AG04449 (cell line): ENCODE measurements at regions of chr19 and their contacts with region 1.

Region 1: GRCh38 chr19:44845612-44846454 is at the start of gene NECTIN2:
- DNase-seq: peak; percentile 88
- H3K4me3 ChIP-seq: peak within 1 kb of the TSS; percentile 89
- CTCF ChIP-seq: peak; percentile 72

Region 2: DNA sequence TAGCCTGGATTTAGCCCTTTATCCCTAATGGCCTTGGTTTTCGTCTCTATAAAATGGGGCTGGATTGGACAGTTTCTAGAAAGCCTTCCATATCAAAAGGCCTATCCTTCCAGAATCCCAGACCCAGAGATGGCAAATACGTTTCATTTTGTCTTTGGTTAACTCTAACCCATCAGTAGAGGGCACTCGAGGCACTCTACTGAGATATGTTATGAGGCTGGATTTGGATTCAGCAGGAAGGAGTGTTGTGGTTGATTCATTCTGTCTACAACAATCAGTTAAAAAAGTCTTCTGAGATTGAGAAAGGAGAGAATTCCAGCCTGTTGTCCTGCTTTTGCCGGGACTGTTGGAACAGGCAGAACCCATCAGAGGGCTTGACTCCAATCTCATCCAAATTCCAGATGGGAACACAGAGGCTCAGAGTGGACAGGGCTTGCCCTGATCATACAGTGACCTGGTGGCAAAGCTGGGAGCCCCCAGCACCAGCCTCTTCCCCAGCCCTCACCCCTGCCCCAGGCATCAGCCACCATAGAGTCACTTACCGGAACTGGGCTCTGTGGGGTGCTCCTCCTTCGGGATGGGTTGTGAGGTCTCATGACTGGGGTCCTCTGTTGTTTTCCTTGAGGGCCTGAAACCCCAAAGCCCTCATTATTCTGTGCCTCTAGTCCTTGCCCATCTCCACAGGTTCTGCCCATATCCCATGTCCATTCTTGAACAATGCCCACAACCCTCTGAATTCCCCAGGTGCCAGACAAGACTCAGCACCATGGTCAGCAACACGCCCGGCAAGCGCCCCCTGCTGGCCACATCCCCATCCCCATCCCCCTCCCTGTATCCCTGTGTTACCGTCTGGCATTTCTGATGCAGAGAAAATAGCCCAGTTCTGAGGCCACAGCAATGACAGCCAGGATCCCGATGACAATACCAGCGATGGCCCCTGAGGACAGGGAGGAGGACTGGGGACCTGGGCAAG is 333.2 kb before region 1 on chr19:
- CTCF ChIA-PET with region 1: no interaction called
- POLR2A ChIA-PET with region 1: no interaction called
- DNase-seq: no peak
- H3K4me3 ChIP-seq: no peak overlapping the region
- CTCF ChIP-seq: peak; percentile 54

Region 3: DNA sequence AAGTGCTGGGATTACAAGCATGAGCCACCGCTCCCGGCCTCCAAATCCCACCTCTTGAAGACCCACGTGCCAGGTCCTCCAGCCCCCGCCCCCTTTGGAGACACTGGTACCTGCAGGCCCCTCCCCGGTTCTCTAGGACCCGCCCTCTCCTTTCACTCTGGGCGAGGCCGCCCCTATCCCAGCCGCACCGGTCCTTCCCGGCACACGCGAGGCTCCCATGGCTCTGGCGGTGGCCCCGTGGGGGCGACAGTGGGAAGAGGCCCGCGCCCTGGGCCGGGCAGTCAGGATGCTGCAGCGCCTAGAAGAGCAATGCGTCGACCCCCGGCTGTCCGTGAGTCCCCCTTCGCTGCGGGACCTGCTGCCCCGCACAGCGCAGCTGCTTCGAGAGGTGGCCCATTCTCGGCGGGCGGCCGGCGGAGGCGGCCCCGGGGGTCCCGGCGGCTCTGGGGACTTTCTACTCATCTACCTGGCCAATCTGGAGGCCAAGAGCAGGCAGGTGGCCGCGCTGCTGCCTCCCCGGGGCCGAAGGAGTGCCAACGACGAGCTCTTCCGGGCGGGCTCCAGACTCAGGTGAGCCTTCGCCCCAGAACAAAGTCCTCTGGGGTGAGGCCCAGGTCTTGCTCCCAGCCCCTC is 68.0 kb before region 1 on chr19 and contains the start of gene CBLC:
- CTCF ChIA-PET with region 1: interaction called, 50 read pairs
- POLR2A ChIA-PET with region 1: interaction called, 3 read pairs
- DNase-seq: no peak
- H3K4me3 ChIP-seq: no peak within 1 kb of the TSS
- CTCF ChIP-seq: no peak

Region 4: DNA sequence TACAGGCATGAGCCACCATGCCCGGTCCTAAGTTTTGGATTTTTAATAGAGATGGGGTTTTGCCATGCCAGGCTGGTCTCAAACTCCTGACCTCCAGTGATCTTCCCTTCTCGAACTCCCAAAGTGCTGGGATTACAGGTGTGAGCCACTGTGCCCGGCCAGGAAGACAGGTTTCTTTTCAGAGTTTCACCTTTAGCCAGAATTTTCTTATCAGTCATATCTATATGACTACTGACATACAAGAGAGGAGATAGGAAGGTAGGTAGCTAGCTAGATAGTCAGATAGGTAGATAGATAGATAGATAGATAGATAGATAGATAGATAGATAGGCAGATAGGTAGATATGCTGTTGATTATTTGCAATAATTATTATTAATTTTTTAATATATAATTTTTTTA is 60.6 kb before region 1 on chr19:
- CTCF ChIA-PET with region 1: interaction called, 50 read pairs
- POLR2A ChIA-PET with region 1: no interaction called
- DNase-seq: no peak
- H3K4me3 ChIP-seq: no peak overlapping the region
- CTCF ChIP-seq: no peak

Region 5: GRCh38 chr19:44800461-44800860 is 45.4 kb before region 1 on chr19:
- CTCF ChIA-PET with region 1: interaction called, 39 read pairs
- POLR2A ChIA-PET with region 1: no interaction called
- DNase-seq: no peak
- H3K4me3 ChIP-seq: no peak overlapping the region
- CTCF ChIP-seq: peak; percentile 100

Region 6: DNA sequence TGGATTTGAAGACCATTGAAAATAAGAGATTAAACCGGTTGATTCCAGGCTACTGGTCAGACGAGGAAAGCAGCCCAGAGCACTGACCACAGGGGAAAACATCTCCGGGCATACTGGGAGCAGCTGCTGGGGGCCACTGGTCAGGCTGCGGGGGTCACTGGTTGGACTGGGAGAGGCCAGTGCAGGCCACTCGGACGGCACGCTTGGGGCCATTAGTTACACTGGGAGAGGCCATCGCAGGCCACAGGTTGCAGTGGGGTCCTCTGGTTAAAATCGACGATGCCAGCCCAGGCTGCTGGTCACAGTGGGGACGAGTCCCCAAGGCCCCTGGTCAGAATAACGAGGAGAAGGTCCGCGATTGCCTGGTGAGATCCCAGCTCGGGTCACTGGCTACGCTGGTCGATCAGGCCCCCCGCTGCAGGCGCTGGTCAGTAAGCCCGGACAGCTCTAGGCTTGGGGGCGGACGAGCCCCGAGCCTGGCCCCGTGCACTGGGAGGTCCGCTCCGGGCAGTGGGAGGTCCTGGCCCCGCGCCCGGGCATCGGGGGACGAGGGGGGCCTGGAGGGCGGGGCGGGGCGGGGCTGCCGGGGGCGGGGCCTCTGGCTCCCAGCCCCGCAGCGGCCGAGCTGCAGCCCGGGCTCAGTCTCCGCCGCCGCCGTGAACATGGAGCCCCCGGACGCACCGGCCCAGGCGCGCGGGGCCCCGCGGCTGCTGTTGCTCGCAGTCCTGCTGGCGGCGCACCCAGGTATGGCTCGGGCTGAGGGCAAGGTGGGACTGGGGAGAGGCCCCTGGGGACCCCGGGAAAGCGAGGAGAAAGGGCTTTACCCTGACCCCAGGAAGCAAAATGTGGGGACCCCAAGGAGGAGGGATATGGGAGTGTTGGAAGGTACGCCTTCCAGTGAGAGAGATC is 37.1 kb before region 1 on chr19 and contains the start of gene BCAM:
- CTCF ChIA-PET with region 1: interaction called, 11 read pairs
- POLR2A ChIA-PET with region 1: no interaction called
- DNase-seq: no peak
- H3K4me3 ChIP-seq: peak within 1 kb of the TSS; percentile 64
- CTCF ChIP-seq: no peak